Endothelial cell of umbilical vein (primary cell): ENCODE measurements at regions of chr1 and their contacts with region 1.

Region 1: DNA sequence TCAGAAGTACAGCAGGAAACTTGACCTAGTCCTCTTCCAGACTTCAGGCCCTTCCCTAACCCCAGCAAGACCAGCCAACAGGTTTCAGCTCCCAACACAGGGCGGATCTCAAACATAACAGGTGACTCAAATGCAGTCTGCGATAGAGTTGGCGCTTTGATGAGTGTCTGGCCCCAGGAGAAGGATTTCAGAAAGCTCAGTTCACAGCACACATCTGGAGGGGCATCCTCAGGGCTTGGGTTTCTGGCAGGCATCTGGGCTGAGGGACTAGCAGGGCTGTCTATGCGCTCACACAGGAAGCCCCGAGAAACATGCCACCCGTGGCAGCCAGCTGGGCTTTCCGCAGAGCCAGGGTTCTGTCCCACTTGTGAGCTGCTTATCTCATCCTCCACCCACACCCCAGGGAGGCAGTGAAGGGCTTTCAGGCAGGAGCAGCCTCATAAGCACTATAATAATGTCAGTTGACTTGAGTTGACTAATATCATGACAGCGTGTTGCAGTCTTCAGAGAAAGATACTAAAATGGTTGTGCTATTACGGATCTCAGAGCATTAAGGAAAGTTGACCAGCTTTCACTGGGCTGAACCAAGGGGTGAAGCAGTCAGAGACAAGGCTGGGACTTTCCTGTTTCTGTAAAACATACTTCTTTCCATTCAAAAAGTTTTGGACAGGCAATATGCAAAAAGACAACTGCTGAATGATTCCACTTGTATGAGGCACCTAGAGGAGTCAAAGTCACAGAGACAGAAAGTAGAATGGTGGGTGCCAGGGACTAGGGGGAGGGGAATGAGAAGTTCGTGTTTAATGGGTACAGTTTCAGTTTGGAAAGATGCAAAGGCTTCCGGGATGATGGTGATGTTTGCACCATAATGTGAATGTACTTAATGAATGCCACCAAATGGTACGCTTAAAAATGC is 233.0 kb upstream of the IRF2BP2 start:
- DNase-seq: no peak
- H3K4me3 ChIP-seq: no peak overlapping the region
- H3K27ac ChIP-seq: no peak overlapping the region
- H3K4me1 ChIP-seq: peaks cover 17% of the 10 kb centered on the region
- H3K27me3 ChIP-seq: no peaks in the 10 kb centered on the region
- CTCF ChIP-seq: no peak
- POLR2A ChIP-seq: no peak

Region 2: DNA sequence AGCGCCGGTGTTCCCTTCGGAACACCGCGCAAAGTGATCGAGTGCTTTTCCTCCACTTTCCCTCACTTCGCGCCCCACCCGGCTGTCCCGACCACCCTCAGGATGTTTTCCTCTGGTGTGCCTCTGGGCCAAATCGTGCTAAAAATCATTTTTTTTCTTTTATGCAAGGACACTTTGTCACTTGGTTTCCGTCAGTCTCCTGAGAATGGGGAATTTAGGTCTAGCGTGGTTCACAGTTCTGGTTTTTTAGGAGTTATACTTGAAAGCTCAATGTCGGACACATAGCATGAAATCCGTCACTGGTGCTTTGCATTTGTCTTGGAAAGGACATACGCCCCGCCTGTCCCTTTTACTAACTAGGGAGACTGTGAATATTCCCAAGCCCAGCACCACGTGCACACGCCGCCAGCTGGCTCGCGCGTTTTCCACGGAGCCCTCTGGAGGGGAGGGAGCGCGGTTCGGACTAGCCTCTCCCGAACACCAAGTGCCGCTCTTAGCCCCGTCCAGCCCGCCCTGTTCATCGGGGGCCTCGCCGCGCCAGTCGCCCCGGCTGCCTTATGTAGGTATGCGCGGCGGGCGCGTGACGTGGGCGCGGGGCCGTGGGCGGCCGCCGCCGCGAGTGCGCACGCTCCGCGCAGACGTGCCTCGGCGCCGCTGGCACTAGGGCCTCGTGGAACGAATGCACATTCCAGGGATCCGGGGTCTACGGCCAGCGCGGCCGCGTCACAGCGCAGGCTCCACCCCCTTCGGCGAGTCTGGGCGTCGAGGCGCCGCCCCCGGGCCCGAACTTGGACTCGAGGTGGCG is 232.4 kb before region 1 on chr1:
- CTCF ChIA-PET with region 1: no interaction called
- POLR2A ChIA-PET with region 1: no interaction called
- dilution Hi-C with region 1: no loop called
- intact Hi-C with region 1: loop called (anchors 1 kb)
- DNase-seq: peak; percentile 95
- H3K4me3 ChIP-seq: peak overlapping the region; percentile 17 to 78 (median 57)
- H3K27ac ChIP-seq: peak overlapping the region; percentile 99
- H3K4me1 ChIP-seq: peaks cover 37% of the 10 kb centered on the region
- H3K27me3 ChIP-seq: no peaks in the 10 kb centered on the region
- CTCF ChIP-seq: peak in 1 of 2 donors; percentile 14
- POLR2A ChIP-seq: peak; percentile 10

Region 3: GRCh38 chr1:234743791-234744611 is 99.0 kb before region 1 on chr1:
- CTCF ChIA-PET with region 1: interaction called, 3 read pairs
- POLR2A ChIA-PET with region 1: interaction called, 4 read pairs
- dilution Hi-C with region 1: loop called (anchors 25 kb)
- intact Hi-C with region 1: loop called (anchors 1 kb)
- DNase-seq: peak; percentile 99
- H3K4me3 ChIP-seq: peak overlapping the region in 1 of 3 experiments; percentile 7
- H3K27ac ChIP-seq: peak overlapping the region; percentile 88
- H3K4me1 ChIP-seq: peaks cover 36% of the 10 kb centered on the region
- H3K27me3 ChIP-seq: no peaks in the 10 kb centered on the region
- CTCF ChIP-seq: peak in 1 of 2 donors; percentile 15
- POLR2A ChIP-seq: peak; percentile 91

Region 4: GRCh38 chr1:234823191-234824176 is 19.5 kb before region 1 on chr1:
- CTCF ChIA-PET with region 1: no interaction called
- POLR2A ChIA-PET with region 1: no interaction called
- dilution Hi-C with region 1: no loop called
- intact Hi-C with region 1: no loop called
- DNase-seq: no peak
- H3K4me3 ChIP-seq: no peak overlapping the region
- H3K27ac ChIP-seq: no peak overlapping the region
- H3K4me1 ChIP-seq: no peaks in the 10 kb centered on the region
- H3K27me3 ChIP-seq: peaks cover 6 to 8% of the 10 kb centered on the region in 2 experiments
- CTCF ChIP-seq: no peak
- POLR2A ChIP-seq: no peak

Region 5: DNA sequence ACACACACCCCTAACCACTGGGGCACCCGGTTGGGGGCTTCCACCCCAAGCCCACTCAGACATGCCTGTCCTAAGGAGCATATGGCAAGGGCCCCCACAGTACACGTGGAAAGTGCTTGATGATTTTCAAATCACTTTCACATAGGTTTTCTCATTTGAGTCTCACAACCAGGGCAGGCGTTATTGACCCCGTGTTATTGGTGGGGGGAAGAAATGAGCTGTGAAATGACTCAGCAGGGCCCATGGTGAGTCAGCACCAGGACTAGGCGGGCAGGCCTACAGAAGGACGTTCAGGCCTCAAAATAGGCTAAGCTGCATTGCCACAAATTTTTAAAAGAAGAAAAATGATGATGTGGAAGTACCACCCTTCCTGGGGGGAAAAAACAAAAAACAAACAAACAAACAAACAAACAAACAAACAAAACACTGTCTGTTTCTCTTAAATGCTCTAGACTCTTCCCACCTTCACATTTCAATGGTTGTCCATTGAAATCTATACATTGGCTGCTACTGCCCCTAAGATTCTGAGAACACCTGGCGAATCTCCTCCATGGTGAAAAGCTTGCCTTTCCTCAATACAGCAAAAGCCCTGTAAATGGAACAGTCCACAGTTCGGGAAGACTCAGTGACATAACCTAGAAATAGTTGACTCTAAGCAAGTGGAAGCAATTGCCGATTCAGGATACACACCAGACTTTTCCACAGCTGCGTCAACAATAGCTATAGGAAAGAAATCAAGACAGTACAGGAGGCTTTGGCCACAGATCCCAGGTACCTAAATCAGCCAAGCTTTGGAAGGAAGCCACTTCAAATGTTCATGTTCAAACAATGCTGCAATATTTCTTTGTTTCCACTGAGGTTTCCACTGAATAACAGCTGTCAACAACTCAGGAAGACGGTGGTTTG is 51.0 kb after region 1 on chr1:
- CTCF ChIA-PET with region 1: interaction called, 3 read pairs
- POLR2A ChIA-PET with region 1: no interaction called
- dilution Hi-C with region 1: no loop called
- intact Hi-C with region 1: loop called (anchors 1 kb)
- DNase-seq: peak; percentile 98
- H3K4me3 ChIP-seq: no peak overlapping the region
- H3K27ac ChIP-seq: peak overlapping the region; percentile 93
- H3K4me1 ChIP-seq: peaks cover 20% of the 10 kb centered on the region
- H3K27me3 ChIP-seq: no peaks in the 10 kb centered on the region
- CTCF ChIP-seq: no peak
- POLR2A ChIP-seq: no peak

Region 6: DNA sequence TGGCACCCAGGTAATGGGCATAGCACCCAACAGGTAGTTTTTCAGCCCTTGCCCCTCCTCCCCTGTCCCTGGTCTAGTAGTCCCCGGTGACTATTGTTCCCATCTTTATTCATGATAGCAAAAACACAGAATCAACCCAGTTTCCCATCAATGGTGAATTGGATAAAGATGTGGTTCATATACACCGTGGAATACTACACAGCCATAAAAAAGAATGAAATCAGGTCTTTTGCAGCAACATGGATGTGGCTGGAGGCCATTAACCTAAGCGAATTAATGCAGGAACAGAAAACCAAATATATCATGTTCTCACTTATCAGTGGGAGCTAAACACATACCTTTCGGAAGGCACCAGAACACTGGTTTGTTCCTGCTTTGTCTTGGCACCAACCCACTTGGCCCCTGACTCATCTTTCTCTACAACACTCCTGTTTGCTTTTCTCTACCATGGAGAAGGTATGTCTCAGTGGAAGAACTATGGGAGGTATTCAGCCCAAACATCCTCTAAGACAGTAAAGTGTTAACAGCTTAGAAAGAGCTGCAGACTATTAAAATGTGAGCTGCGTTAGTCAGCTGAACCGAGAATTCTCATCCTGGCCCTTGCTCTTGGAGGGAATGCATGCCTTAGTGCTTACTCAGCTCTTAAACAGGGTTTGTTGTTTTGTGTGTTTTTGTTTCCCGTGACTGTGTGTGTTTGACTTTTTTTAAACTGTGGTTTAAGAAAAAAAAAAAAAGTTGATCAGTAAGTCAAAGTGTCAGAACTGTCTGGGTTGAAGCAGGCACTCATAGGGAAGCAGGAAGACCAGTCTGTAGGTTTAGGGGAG is 82.7 kb after region 1 on chr1:
- CTCF ChIA-PET with region 1: interaction called, 5 read pairs
- POLR2A ChIA-PET with region 1: no interaction called
- dilution Hi-C with region 1: no loop called
- intact Hi-C with region 1: loop called (anchors 1 kb)
- DNase-seq: peak; percentile 94
- H3K4me3 ChIP-seq: no peak overlapping the region
- H3K27ac ChIP-seq: peak overlapping the region; percentile 90
- H3K4me1 ChIP-seq: peaks cover 41% of the 10 kb centered on the region
- H3K27me3 ChIP-seq: no peaks in the 10 kb centered on the region
- CTCF ChIP-seq: no peak
- POLR2A ChIP-seq: no peak

Region 7: DNA sequence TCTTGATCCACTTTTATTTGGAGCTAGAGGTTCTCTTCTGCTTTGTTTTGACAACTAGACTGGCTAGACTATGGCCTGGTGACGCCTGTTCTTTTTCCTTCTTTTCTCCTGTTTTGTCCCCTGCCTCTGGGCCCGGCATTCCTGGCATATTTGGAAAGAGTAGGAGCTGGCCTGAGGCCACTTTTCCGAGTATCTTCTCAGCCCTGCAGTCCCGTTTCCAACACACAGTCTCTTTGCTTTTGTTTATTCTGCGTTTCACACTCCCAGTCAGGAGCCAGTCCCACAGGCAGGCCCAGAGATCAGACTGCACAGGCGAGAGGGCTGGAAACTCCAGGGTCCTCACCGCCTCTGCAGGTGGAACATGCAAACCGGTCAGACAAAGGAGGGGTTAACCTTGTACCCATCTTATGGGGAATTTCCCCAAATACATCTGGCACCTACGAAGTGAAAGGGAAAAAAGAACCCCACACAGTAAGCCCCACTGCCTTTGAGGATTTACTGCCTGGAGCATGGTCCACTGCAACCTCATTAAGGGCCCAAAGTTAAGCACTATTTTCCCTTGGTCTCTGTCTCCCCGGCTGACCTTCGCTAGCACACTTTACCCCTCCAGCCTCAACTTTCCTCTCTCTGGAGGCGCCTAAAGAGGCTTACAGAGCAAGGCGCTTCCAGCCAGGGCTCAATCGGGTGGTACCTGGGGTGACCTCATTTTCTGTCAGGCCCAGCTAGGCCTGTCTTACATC is 144.6 kb after region 1 on chr1:
- CTCF ChIA-PET with region 1: no interaction called
- POLR2A ChIA-PET with region 1: no interaction called
- dilution Hi-C with region 1: no loop called
- intact Hi-C with region 1: loop called (anchors 1 kb)
- DNase-seq: peak; percentile 98
- H3K4me3 ChIP-seq: no peak overlapping the region
- H3K27ac ChIP-seq: peak overlapping the region; percentile 100
- H3K4me1 ChIP-seq: peaks cover 47% of the 10 kb centered on the region
- H3K27me3 ChIP-seq: no peaks in the 10 kb centered on the region
- CTCF ChIP-seq: no peak
- POLR2A ChIP-seq: no peak